ENCODE measurements at regions of chr14 and their contacts with region 1.

Region 1: DNA sequence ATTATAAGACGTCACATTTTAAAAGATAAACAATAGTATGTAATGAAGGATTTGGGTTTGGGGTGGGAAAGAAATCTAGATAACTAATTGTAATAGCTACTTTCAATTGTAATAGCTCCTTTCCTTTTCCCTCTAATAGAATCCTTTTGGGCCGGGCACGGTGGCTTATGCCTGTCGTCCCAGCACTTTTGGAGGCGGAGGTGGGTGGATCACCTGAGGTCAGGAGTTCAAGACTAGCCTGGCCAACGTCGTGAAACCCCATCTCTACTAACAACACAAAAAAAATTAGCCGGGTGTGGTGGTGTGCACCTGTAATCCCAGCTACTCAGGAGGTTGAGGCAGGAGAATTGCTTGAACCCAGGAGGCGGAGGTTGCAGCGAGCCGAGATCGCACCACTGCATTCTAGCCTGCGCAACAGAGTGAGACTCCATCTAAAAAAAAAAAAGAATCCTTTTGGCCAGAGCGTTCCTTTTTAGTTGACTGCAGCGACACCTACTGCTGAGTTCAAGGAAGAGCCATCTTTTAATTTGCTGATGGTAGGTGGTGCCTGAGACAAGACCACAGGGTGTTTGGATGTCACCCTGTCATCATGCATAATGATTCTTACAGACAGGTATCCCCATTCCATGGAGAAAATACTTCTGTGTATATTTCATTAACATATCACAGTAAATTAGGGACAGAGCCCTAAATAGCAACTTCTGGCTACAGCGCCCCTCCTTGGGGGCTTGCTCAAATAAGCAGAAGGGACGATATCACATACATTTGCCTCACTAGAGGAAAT is 79.5 kb downstream of the ARMH4 start:
- DNase-seq: peak in 1 of 2 donors; percentile 12
- ATAC-seq: peak in 3 of 4 donors; percentile 48 to 74 (median 64)
- H3K4me3 ChIP-seq: no peak overlapping the region
- H3K27ac ChIP-seq: no peak overlapping the region
- H3K4me1 ChIP-seq: no peaks in the 10 kb centered on the region
- H3K27me3 ChIP-seq: no peaks in the 10 kb centered on the region
- CTCF ChIP-seq: peak; percentile 72

Region 2: GRCh38 chr14:57486767-57487379 is 585.6 kb before region 1 on chr14:
- intact Hi-C with region 1: loop called (anchors 2 to 5 kb)
- DNase-seq: no peak
- ATAC-seq: no peak
- H3K4me3 ChIP-seq: no peak overlapping the region
- H3K27ac ChIP-seq: no peak overlapping the region
- H3K4me1 ChIP-seq: no peaks in the 10 kb centered on the region
- H3K27me3 ChIP-seq: no peaks in the 10 kb centered on the region
- CTCF ChIP-seq: peak; percentile 61